CD4-positive, alpha-beta memory T cell (primary cell): ENCODE measurements at regions of chr1 and their contacts with region 1.

Region 1: GRCh38 chr1:200302192-200302920 is 107.5 kb downstream of the ZNF281 start:
- DNase-seq: peak; percentile 62 to 75 (median 71)
- H3K4me3 ChIP-seq: peak overlapping the region; percentile 71 to 89
- H3K4me3 Mint-ChIP-seq: peak overlapping the region; percentile 90 to 96 (median 93)
- H3K27ac ChIP-seq: peak overlapping the region; percentile 35
- H3K27ac Mint-ChIP-seq: peak overlapping the region; percentile 76 to 94 (median 87)
- H3K4me1 ChIP-seq: peaks cover 19% of the 10 kb centered on the region
- H3K4me1 Mint-ChIP-seq: peaks cover 12 to 25% (median 16%) of the 10 kb centered on the region in 4 donors
- H3K27me3 ChIP-seq: no peaks in the 10 kb centered on the region
- H3K27me3 Mint-ChIP-seq: peaks cover 0 to 1% of the 10 kb centered on the region in 2 donors

Region 2: DNA sequence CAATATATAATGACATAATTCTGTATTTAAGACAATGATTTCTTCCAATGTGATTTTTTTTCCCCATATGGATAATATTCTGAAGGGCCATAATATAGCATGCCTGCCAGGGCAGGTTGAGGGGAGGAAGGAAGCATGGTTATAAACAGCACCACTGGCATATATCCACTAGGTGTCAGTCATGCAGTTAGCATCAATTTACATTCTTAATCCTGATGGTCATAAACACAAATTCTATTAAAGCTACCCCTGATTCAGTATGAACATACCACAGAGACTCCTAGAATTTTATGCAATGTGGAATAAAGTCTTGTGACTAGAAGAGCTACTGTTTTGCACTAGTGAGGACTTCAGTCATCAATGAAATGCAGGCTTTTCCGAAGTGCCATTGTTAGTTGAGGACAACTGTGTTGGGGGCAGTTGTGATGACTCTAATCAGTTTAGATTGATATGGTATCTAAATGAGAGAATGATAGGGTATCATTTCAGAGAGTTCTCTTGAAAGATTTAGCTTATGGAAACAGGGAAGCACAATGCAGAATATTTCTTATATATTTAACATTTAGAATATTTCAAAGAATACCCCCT is 617.6 kb before region 1 on chr1:
- CTCF ChIA-PET with region 1: interaction called, 6 read pairs
- POLR2A ChIA-PET with region 1: no interaction called
- intact Hi-C with region 1: loop called (anchors 1 kb)
- DNase-seq: peak in 4 of 5 donors; percentile 23 to 34 (median 32)
- H3K4me3 ChIP-seq: no peak overlapping the region
- H3K4me3 Mint-ChIP-seq: no peak overlapping the region
- H3K27ac ChIP-seq: no peak overlapping the region
- H3K27ac Mint-ChIP-seq: no peak overlapping the region
- H3K4me1 ChIP-seq: no peaks in the 10 kb centered on the region
- H3K4me1 Mint-ChIP-seq: no peaks in the 10 kb centered on the region
- H3K27me3 ChIP-seq: no peaks in the 10 kb centered on the region
- H3K27me3 Mint-ChIP-seq: peaks cover 6 to 7% of the 10 kb centered on the region in 2 donors

Region 3: GRCh38 chr1:199843861-199844260 is 458.5 kb before region 1 on chr1:
- CTCF ChIA-PET with region 1: no interaction called
- POLR2A ChIA-PET with region 1: no interaction called
- intact Hi-C with region 1: no loop called
- DNase-seq: no peak
- H3K4me3 ChIP-seq: no peak overlapping the region
- H3K4me3 Mint-ChIP-seq: no peak overlapping the region
- H3K27ac ChIP-seq: no peak overlapping the region
- H3K27ac Mint-ChIP-seq: no peak overlapping the region
- H3K4me1 ChIP-seq: no peaks in the 10 kb centered on the region
- H3K4me1 Mint-ChIP-seq: no peaks in the 10 kb centered on the region
- H3K27me3 ChIP-seq: no peaks in the 10 kb centered on the region
- H3K27me3 Mint-ChIP-seq: peaks cover 4% of the 10 kb centered on the region in 2 donors

Region 4: DNA sequence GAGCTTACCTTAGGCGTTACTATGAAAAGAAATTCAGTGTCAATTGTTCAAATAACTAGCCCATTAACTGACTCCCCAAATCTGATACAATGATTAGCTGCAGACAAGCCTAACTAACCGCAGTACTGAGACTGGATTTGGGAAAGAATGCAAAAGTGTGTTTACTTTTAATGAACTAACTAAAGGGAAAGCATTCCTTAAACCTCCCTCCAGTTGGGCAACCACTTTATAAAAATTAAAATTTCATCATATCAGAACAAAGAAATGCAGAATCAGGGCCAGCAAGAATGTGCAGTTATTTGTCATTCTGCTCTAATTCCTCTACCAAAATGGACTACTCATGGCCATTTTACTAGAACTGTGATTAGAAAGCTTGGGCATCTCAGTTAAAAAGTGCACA is 286.5 kb before region 1 on chr1:
- CTCF ChIA-PET with region 1: no interaction called
- POLR2A ChIA-PET with region 1: no interaction called
- intact Hi-C with region 1: no loop called
- DNase-seq: no peak
- H3K4me3 ChIP-seq: no peak overlapping the region
- H3K4me3 Mint-ChIP-seq: no peak overlapping the region
- H3K27ac ChIP-seq: no peak overlapping the region
- H3K27ac Mint-ChIP-seq: no peak overlapping the region
- H3K4me1 ChIP-seq: no peaks in the 10 kb centered on the region
- H3K4me1 Mint-ChIP-seq: no peaks in the 10 kb centered on the region
- H3K27me3 ChIP-seq: no peaks in the 10 kb centered on the region
- H3K27me3 Mint-ChIP-seq: peaks cover 7% of the 10 kb centered on the region in 2 donors

Region 5: GRCh38 chr1:200154069-200154767 is 148.1 kb before region 1 on chr1:
- CTCF ChIA-PET with region 1: no interaction called
- POLR2A ChIA-PET with region 1: interaction called, 3 read pairs
- intact Hi-C with region 1: loop called (anchors 5 kb)
- DNase-seq: peak; percentile 50 to 77 (median 54)
- H3K4me3 ChIP-seq: no peak overlapping the region
- H3K4me3 Mint-ChIP-seq: peak overlapping the region in 7 of 8 donors; percentile 56 to 94 (median 77)
- H3K27ac ChIP-seq: peak overlapping the region; percentile 55
- H3K27ac Mint-ChIP-seq: peak overlapping the region; percentile 54 to 97 (median 91)
- H3K4me1 ChIP-seq: peaks cover 36% of the 10 kb centered on the region
- H3K4me1 Mint-ChIP-seq: peaks cover 18 to 43% (median 24%) of the 10 kb centered on the region in 4 donors
- H3K27me3 ChIP-seq: no peaks in the 10 kb centered on the region
- H3K27me3 Mint-ChIP-seq: no peaks in the 10 kb centered on the region

Region 6: DNA sequence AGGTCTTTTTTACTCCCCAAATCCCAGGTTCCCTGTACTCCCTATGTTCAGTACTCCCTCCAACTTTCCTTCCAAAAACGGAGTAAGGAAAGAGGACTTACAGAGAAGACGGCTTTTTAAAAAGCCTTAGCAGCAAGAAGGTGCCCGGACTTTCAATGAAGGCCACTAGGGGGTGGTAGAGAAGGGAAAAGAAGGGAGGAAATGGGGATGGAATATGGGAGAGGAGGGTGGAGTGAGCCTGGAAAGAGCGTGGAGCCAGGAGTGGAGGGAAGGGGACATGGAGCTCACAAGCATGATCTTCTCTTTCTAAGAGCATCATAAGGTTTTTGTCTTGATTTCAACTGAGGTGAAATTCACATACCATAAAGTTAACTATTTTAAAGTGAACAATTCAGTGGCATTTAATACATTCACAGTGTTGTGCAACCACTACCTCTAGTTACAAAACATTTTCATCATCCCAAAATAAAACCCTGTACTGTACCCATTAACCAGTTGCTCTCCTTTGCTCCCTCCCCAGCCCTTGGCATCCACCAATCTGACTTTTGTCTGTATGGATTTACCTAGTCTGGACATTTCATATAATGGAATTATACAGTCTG is 22.4 kb before region 1 on chr1:
- CTCF ChIA-PET with region 1: interaction called, 53 read pairs
- POLR2A ChIA-PET with region 1: no interaction called
- intact Hi-C with region 1: loop called (anchors 1 kb)
- DNase-seq: peak in 4 of 5 donors; percentile 3 to 24 (median 14)
- H3K4me3 ChIP-seq: no peak overlapping the region
- H3K4me3 Mint-ChIP-seq: no peak overlapping the region
- H3K27ac ChIP-seq: no peak overlapping the region
- H3K27ac Mint-ChIP-seq: no peak overlapping the region
- H3K4me1 ChIP-seq: no peaks in the 10 kb centered on the region
- H3K4me1 Mint-ChIP-seq: no peaks in the 10 kb centered on the region
- H3K27me3 ChIP-seq: no peaks in the 10 kb centered on the region
- H3K27me3 Mint-ChIP-seq: peaks cover 3 to 4% of the 10 kb centered on the region in 2 donors

Region 7: DNA sequence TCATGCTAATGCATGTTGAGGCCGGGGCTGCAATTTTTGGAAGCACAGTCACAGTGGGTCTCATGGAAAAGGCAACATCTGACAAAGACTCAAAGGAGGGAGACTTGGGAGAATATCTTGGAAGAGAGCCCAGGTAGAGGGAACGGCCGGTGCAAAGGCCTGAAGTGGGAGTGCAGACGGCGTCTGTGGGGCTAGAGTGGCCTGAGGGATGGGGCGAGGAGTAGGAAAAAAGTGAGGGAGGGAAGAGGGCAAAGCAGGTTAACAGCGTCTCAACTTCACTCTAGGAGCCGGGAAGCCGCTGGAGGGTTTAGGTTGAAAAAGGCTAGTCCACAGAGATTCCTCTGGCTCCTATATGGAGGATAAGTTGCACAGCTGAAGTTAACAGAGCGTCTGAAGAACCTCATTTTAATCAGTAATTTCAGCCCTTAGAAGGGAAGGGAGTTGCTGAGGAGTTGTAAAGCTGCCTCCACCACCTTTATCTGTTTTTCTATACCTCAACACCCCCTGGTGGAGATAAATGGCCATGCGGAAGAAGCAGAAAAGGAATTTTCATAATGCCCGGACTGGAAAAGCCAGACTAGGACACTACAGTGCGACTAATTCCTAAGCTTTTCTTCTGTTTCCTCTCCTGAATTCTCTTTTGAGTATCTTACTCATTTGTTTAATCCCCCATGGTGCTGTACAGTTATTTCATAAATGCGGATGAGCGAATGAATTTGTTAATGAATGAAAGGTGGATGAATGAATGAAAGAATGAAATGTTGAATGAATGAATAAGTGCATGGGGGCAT is 186.2 kb after region 1 on chr1:
- CTCF ChIA-PET with region 1: interaction called, 6 read pairs
- POLR2A ChIA-PET with region 1: no interaction called
- intact Hi-C with region 1: loop called (anchors 10 kb)
- DNase-seq: peak in 4 of 5 donors; percentile 42 to 54 (median 52)
- H3K4me3 ChIP-seq: no peak overlapping the region
- H3K4me3 Mint-ChIP-seq: no peak overlapping the region
- H3K27ac ChIP-seq: no peak overlapping the region
- H3K27ac Mint-ChIP-seq: no peak overlapping the region
- H3K4me1 ChIP-seq: no peaks in the 10 kb centered on the region
- H3K4me1 Mint-ChIP-seq: peaks cover 0 to 5% (median under 1%) of the 10 kb centered on the region in 4 donors
- H3K27me3 ChIP-seq: no peaks in the 10 kb centered on the region
- H3K27me3 Mint-ChIP-seq: peaks cover 6 to 14% of the 10 kb centered on the region in 2 donors